ENCODE measurements at regions of chr1 and their contacts with region 1.

Region 1: GRCh38 chr1:158124999-158125398 is 55.7 kb upstream of the CD1D start:
- H3K4me3 ChIP-seq: no peak overlapping the region
- H3K27ac ChIP-seq: no peak overlapping the region
- H3K4me1 ChIP-seq: no peaks in the 10 kb centered on the region
- CTCF ChIP-seq: peak; percentile 78

Region 2: DNA sequence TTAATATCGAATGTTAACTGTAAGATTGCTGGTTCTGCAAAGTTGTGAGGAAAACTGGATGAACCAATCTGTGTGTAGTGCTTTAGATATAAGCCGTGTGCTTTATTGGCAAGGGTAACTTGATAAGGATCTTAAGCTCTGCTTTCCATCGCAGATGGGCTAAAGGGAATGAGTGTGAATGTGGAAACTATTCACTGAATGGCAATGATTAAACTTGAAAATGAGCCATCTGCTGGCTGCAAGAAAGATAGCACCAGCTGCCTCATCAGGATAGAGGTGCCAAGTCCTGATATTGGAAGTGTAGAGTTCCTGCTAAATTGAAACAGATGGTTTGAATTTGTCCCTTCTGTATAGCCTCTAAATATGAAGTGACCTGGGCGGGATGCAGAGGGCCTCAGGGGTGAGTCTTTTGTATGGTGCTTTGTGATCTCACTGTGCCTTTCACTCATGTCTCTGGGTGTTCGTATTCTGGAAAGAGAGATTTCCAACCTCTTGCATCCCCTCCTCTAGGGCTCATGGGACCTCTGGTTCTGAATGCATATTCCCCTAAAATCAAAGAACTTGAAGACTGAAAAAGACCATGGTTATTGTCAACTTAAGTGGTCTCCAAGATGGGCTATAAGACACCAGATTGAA is 433.6 kb before region 1 on chr1:
- CTCF ChIA-PET with region 1: interaction called, 10 read pairs
- POLR2A ChIA-PET with region 1: no interaction called
- H3K4me3 ChIP-seq: no peak overlapping the region
- H3K27ac ChIP-seq: no peak overlapping the region
- H3K4me1 ChIP-seq: no peaks in the 10 kb centered on the region
- CTCF ChIP-seq: 0 out of 2 replicates have a peak, but pooled peaks have one; percentile 33

Region 3: DNA sequence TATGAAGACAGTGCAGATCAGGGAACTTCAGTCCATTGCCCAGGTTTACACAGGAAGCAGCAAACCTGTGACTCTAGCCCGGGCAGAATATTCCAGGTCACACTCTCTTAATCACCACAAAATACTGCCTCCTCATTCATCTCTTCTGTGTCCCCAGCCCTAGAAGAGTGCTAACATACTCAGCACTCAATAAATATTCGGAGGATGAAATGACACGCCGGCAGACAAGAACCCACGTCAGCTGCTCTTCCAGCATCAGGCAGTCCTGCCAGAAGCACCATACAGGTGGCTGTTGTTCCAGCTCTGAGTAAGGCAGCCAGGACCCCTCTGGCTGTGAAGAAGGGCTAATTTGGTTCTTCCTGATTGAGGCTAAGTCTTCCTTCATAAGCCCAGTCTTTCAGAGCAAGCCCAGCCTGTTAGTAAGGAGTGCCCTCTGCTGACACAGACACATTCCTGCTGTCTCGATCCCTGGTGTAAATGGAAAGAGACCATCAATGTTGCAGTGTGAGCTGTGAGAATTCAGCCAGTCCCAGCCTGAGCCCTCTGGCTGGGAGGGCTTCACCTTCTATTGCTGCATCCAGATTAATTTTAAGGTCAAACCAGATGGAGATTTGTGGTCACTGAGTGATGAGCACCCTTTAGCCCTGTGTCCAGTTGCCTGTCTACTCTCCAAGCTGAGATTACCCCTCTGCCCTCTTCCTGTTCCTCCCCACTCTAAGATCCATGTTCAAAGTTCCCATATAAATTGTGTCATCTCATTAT is 176.5 kb before region 1 on chr1:
- CTCF ChIA-PET with region 1: interaction called, 15 read pairs
- POLR2A ChIA-PET with region 1: interaction called, 3 read pairs
- H3K4me3 ChIP-seq: no peak overlapping the region
- H3K27ac ChIP-seq: no peak overlapping the region
- H3K4me1 ChIP-seq: no peaks in the 10 kb centered on the region
- CTCF ChIP-seq: peak; percentile 76

Region 4: DNA sequence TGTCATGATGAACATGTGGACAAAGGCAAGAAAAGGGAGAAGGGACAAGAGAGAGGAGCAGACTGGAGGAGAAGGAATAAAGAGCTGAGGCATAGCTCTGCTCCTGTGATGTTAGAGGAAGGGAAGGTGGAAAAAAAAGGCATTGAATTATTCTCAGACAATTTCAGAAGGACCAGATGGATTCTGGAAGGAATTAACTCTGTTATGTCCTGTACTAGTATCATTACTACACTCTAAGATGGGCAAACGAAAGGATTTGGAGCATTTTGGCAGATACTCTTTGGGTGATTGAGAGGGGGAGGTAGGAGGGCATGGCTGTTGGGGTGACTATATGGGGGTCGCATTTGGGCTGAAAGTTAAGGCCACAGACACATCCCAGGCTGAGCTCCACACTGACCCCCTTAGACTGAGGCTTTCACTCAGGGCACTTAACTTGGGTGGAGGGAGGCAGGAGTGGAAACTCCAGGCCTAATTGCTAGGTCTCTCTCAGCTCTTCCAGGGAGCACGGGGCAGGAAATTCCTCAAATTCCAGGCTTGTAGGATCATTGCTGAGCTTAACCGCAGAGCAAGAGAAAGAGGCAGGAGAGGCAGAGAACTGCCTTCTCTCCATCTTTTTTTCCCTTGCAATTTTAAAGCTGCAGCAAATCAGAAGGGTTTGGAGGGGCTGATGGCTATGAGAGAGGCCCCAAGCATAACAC is 105.7 kb before region 1 on chr1:
- CTCF ChIA-PET with region 1: interaction called, 11 read pairs
- POLR2A ChIA-PET with region 1: no interaction called
- H3K4me3 ChIP-seq: no peak overlapping the region
- H3K27ac ChIP-seq: no peak overlapping the region
- H3K4me1 ChIP-seq: peaks cover 11% of the 10 kb centered on the region
- CTCF ChIP-seq: no peak